Activated naive CD4-positive, alpha-beta T cell treated with anti-CD3 and anti-CD28 coated beads, Interleukin-2, amount 10 ng/mL, durations not matched to agents 7 days and 5 days (primary cell): ENCODE measurements at regions of chr17 and their contacts with region 1.

Region 1: GRCh38 chr17:45277216-45277849 is 15.4 kb upstream of the SPATA32 start:
- DNase-seq: peak; percentile 95
- H3K4me3 Mint-ChIP-seq: no peak overlapping the region
- H3K27ac Mint-ChIP-seq: no peak overlapping the region
- H3K4me1 Mint-ChIP-seq: peaks cover 16% of the 10 kb centered on the region
- H3K27me3 Mint-ChIP-seq: no peaks in the 10 kb centered on the region

Region 2: DNA sequence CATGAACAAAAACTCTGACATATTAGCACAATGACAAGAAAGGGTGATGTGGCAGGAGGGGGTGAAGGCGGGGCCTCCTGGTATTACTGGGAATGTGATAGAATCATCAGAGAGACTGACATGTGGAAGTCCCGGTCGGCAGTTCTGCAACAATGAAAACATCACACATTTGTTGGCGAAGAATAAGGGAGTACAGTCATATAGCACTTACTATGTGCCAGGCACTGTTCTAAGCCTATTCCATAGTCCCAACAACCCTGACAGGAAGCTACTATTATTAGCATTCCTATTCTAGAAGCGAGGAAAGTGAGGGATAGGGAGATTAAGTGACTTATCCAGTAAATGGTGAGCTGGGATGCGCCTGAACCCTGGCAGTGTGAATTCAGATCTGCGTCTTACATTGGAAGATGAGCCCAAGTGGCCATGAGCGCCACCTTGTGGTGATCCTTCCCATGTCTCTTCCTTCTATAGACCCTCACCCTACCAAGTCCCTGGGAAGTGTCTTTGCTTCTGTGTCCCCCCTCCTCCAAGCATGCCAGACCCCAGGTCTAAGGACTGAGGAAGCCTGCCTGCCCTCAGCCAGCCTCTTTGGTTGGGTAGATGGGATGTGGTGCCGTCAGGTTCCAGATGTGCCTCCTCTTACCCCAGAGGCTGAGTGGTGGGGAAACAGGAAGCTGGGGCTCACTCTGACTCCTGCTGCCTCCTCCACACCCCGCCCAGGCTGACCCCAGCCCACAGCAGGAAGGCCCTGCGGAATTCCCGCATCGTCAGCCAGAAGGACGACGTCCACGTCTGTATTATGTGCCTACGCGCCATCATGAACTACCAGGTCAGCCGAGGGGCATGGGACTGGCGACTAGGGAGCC is 41.7 kb before region 1 on chr17:
- CTCF ChIA-PET with region 1: interaction called, 19 read pairs
- DNase-seq: peak; percentile 86
- H3K4me3 Mint-ChIP-seq: no peak overlapping the region
- H3K27ac Mint-ChIP-seq: peak overlapping the region; percentile 84
- H3K4me1 Mint-ChIP-seq: peaks cover 52% of the 10 kb centered on the region
- H3K27me3 Mint-ChIP-seq: no peaks in the 10 kb centered on the region

Region 3: GRCh38 chr17:45260204-45260783 is 17.0 kb before region 1 on chr17:
- CTCF ChIA-PET with region 1: interaction called, 16 read pairs
- DNase-seq: no peak
- H3K4me3 Mint-ChIP-seq: no peak overlapping the region
- H3K27ac Mint-ChIP-seq: peak overlapping the region; percentile 6
- H3K4me1 Mint-ChIP-seq: peaks cover 37% of the 10 kb centered on the region
- H3K27me3 Mint-ChIP-seq: no peaks in the 10 kb centered on the region

Region 4: DNA sequence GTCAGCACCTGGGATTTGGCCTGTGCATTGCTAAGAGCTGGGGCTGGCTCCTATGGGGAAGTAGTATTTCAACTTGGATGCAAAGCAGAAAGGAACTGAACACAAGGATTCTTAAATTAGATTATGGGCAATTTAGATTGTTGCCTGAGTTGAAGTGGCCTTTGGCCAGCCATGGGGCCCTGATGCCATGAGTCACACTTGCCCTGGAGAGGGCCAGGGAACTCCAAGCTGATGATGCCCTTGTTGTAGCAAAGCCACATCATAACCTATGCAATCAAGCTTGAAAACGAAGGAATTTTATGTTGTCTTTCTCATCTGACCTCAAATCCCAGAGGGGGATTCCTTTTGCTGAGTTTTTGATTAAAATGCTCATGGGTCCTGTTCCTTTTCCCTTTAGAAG is 11.5 kb before region 1 on chr17:
- CTCF ChIA-PET with region 1: interaction called, 16 read pairs
- DNase-seq: no peak
- H3K4me3 Mint-ChIP-seq: no peak overlapping the region
- H3K27ac Mint-ChIP-seq: peak overlapping the region; percentile 62
- H3K4me1 Mint-ChIP-seq: peaks cover 21% of the 10 kb centered on the region
- H3K27me3 Mint-ChIP-seq: no peaks in the 10 kb centered on the region

Region 5: GRCh38 chr17:45317112-45317928 is 40.0 kb after region 1 on chr17:
- CTCF ChIA-PET with region 1: interaction called, 70 read pairs
- DNase-seq: peak; percentile 100
- H3K4me3 Mint-ChIP-seq: peak overlapping the region; percentile 81
- H3K27ac Mint-ChIP-seq: peak overlapping the region; percentile 91
- H3K4me1 Mint-ChIP-seq: peaks cover 80% of the 10 kb centered on the region
- H3K27me3 Mint-ChIP-seq: peaks cover 3% of the 10 kb centered on the region

Region 6: DNA sequence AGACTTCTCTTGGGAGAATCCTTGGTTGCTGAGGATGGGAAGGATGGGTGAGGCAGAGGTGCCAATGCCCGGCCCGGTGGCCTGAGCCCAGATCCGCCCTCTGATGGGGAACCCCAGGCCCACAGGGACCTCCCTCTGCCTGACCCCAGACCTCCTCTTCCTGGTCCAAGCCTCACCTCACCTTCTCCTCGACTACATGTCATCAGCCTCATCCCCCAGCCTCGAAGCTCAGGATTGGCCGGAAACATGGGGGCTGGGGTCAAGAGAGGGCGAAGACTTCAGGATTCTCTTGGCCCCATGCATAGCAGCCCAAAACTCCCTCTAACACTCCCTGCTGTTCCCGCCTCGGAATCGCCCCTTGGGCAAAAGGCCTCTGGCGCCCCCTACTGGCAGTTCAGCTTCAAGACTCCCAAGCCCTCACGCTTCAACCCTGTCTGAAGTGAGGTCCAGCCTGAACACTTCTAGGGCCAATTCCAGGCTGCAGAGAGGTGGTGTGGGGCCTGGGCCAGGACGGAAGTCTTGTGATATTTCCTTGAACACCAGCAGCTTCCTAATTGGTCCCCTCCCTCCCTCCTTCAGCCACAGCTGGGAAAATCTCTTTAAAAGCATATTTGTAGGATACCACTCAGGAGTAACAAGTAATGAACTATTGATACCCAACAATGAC is 108.1 kb after region 1 on chr17:
- CTCF ChIA-PET with region 1: interaction called, 116 read pairs
- DNase-seq: peak; percentile 92
- H3K4me3 Mint-ChIP-seq: no peak overlapping the region
- H3K27ac Mint-ChIP-seq: no peak overlapping the region
- H3K4me1 Mint-ChIP-seq: peaks cover 24% of the 10 kb centered on the region
- H3K27me3 Mint-ChIP-seq: peaks cover 36% of the 10 kb centered on the region